GM23248 (cell line): ENCODE measurements at regions of chr6 and their contacts with region 1.

Region 1: GRCh38 chr6:143586557-143586956 is 75.0 kb upstream of the FUCA2 start:
- DNase-seq: no peak
- H3K4me3 ChIP-seq: no peak overlapping the region
- H3K27ac ChIP-seq: no peak overlapping the region
- H3K4me1 ChIP-seq: peaks cover 26% of the 10 kb centered on the region
- H3K27me3 ChIP-seq: no peaks in the 10 kb centered on the region

Region 2: DNA sequence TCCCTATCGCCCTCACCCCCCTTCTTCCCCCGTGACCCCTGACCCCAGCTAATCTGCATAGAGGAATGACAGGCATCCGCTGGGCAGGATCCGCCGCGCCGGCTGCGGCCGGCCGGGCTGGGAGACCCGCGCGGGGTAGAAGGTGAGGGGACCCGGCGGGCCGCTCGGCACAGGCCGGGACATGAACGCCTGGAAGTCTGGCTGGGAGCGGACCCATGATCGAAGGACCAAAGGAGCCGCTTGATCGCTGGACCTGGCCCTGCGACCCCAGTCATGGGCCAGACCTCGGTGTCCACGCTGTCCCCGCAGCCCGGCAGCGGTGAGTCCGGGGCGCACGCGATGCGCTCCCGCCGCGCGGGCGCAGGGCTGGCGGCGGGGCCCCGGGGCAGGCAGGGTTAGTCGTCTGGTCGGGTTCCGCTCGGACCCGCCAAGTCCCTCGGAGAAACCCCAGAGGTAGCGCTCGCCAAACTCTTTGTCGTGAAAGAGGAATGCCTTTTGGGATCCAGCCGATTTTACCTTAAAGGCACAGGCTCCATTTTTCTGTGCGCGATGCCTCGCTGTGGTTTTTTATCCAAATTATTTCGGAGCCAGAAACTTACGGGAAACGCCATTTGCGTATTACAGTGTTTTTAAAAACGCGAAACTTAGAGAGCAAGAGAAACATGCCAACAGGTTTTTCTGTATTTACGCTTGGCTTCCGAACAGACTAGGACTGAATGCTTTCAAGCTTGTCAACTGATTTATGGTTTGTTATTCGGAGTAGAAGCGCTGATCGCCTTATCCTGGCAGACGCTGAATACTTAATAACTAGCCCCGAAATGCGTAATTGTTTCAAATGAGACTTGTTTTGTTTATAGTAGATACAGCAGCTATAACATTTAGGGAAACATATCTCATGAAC is 91.6 kb after region 1 on chr6 and contains the start of gene PHACTR2:
- in situ Hi-C with region 1: loop called (anchors 5 kb)
- DNase-seq: peak; percentile 91
- H3K4me3 ChIP-seq: peak within 1 kb of the TSS; percentile 82
- H3K27ac ChIP-seq: peak within 1 kb of the TSS; percentile 83
- H3K4me1 ChIP-seq: peaks cover 51% of the 10 kb centered on the region
- H3K27me3 ChIP-seq: no peaks in the 10 kb centered on the region
- total RNA-seq, gene PHACTR2: 39.0 and 41.9 TPM in 2 replicates

Region 3: GRCh38 chr6:143828572-143828971 is 242.0 kb after region 1 on chr6:
- in situ Hi-C with region 1: no loop called
- DNase-seq: no peak
- H3K4me3 ChIP-seq: no peak overlapping the region
- H3K27ac ChIP-seq: no peak overlapping the region
- H3K4me1 ChIP-seq: no peaks in the 10 kb centered on the region
- H3K27me3 ChIP-seq: no peaks in the 10 kb centered on the region

Region 4: DNA sequence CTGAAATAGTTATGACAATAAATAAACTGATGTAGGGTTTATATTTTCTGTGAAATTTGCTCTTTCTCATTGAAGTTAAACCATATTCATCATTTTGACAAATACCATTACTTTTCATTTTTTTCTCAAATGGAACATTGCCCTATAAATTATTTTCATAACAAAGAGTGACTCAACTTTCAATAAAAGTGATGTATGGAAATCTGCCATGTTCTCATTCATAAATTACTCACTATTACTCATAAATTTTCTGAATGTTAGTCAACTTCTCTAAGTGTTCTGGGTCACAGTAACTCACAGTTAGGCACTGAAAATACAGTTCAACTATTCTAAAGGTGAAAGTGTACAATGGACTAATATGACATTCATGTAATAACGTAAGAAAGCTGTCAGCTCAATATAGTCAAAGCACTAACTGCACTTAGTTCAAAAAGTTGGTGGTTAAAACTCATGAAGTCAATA is 544.7 kb after region 1 on chr6:
- in situ Hi-C with region 1: no loop called
- DNase-seq: peak; percentile 83
- H3K4me3 ChIP-seq: no peak overlapping the region
- H3K27ac ChIP-seq: no peak overlapping the region
- H3K4me1 ChIP-seq: peaks cover 11% of the 10 kb centered on the region
- H3K27me3 ChIP-seq: no peaks in the 10 kb centered on the region

Region 5: GRCh38 chr6:144294016-144294415 is 707.5 kb after region 1 on chr6:
- in situ Hi-C with region 1: no loop called
- DNase-seq: peak; percentile 87
- H3K4me3 ChIP-seq: peak overlapping the region; percentile 20
- H3K27ac ChIP-seq: peak overlapping the region; percentile 43
- H3K4me1 ChIP-seq: peaks cover 33% of the 10 kb centered on the region
- H3K27me3 ChIP-seq: no peaks in the 10 kb centered on the region